ENCODE measurements at regions of chr9 and their contacts with region 1.

Region 1: GRCh38 chr9:137590462-137591383 is at the start of gene ZMYND19:
- DNase-seq: peak; percentile 87
- H3K4me3 ChIP-seq: peak within 1 kb of the TSS; percentile 41 to 80 (median 48)
- H3K27ac ChIP-seq: no peak within 1 kb of the TSS
- H3K4me1 ChIP-seq: peaks cover 9% of the 10 kb centered on the region
- H3K27me3 ChIP-seq: no peaks in the 10 kb centered on the region
- CTCF ChIP-seq: no peak
- POLR2A ChIP-seq: no peak
- total RNA-seq, gene ZMYND19: 32.6 and 35.4 TPM in 2 replicates

Region 2: DNA sequence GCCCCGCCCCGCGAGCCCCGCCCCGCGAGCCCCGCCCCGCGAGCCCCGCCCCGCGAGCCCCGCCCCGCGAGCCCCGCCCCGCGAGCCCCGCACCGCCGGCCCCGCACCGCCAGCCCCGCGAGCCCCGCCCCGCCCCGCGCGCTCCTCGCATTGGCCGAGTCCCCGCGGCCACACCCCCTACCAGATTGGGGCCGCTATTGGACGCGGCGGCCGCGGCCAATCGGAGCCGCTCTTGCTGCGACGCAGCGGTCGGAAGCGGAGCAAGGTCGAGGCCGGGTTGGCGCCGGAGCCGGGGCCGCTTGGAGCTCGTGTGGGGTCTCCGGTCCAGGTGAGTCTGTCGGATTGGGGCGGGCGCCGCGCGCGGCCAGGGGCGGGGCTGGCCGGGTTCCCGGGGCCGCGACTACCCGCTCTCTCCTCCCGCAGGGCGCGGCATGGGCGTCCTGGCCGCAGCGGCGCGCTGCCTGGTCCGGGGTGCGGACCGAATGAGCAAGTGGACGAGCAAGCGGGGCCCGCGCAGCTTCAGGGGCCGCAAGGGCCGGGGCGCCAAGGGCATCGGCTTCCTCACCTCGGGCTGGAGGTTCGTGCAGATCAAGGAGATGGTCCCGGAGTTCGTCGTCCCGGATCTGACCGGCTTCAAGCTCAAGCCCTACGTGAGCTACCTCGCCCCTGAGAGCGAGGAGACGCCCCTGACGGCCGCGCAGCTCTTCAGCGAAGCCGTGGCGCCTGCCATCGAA is 38.9 kb before region 1 on chr9 and contains the start of gene MRPL41:
- CTCF ChIA-PET with region 1: no interaction called
- POLR2A ChIA-PET with region 1: interaction called, 6 read pairs
- dilution Hi-C with region 1: no loop called
- intact Hi-C with region 1: loop called (anchors 1 kb)
- DNase-seq: peak; percentile 82
- H3K4me3 ChIP-seq: peak within 1 kb of the TSS; percentile 61 to 67 (median 62)
- H3K27ac ChIP-seq: peak within 1 kb of the TSS; percentile 49
- H3K4me1 ChIP-seq: peaks cover 9% of the 10 kb centered on the region
- H3K27me3 ChIP-seq: no peaks in the 10 kb centered on the region
- CTCF ChIP-seq: no peak
- POLR2A ChIP-seq: peak; percentile 81
- total RNA-seq, gene MRPL41: 50.7 and 53.3 TPM in 2 replicates

Region 3: GRCh38 chr9:137578518-137579258 is 12.0 kb before region 1 on chr9 and contains the start of gene DPH7:
- CTCF ChIA-PET with region 1: interaction called, 15 read pairs
- POLR2A ChIA-PET with region 1: no interaction called
- dilution Hi-C with region 1: no loop called
- intact Hi-C with region 1: no loop called
- DNase-seq: peak; percentile 91
- H3K4me3 ChIP-seq: peak within 1 kb of the TSS; percentile 77 to 94 (median 83)
- H3K27ac ChIP-seq: peak within 1 kb of the TSS; percentile 22
- H3K4me1 ChIP-seq: peaks cover 14% of the 10 kb centered on the region
- H3K27me3 ChIP-seq: no peaks in the 10 kb centered on the region
- CTCF ChIP-seq: peak; percentile 97 to 98
- POLR2A ChIP-seq: peak; percentile 62
- total RNA-seq, gene DPH7: 43.2 TPM in 2 replicates

Region 4: GRCh38 chr9:137605121-137606004 is 14.6 kb after region 1 on chr9 and contains the start of gene ARRDC1:
- CTCF ChIA-PET with region 1: interaction called, 4 read pairs
- POLR2A ChIA-PET with region 1: no interaction called
- dilution Hi-C with region 1: no loop called
- intact Hi-C with region 1: loop called (anchors 1 kb)
- DNase-seq: peak; percentile 84
- H3K4me3 ChIP-seq: peak within 1 kb of the TSS; percentile 34 to 89 (median 62)
- H3K27ac ChIP-seq: peak within 1 kb of the TSS; percentile 48
- H3K4me1 ChIP-seq: peaks cover 5% of the 10 kb centered on the region
- H3K27me3 ChIP-seq: no peaks in the 10 kb centered on the region
- CTCF ChIP-seq: no peak
- POLR2A ChIP-seq: no peak
- total RNA-seq, gene ARRDC1: 21.5 and 22.5 TPM in 2 replicates

Region 5: DNA sequence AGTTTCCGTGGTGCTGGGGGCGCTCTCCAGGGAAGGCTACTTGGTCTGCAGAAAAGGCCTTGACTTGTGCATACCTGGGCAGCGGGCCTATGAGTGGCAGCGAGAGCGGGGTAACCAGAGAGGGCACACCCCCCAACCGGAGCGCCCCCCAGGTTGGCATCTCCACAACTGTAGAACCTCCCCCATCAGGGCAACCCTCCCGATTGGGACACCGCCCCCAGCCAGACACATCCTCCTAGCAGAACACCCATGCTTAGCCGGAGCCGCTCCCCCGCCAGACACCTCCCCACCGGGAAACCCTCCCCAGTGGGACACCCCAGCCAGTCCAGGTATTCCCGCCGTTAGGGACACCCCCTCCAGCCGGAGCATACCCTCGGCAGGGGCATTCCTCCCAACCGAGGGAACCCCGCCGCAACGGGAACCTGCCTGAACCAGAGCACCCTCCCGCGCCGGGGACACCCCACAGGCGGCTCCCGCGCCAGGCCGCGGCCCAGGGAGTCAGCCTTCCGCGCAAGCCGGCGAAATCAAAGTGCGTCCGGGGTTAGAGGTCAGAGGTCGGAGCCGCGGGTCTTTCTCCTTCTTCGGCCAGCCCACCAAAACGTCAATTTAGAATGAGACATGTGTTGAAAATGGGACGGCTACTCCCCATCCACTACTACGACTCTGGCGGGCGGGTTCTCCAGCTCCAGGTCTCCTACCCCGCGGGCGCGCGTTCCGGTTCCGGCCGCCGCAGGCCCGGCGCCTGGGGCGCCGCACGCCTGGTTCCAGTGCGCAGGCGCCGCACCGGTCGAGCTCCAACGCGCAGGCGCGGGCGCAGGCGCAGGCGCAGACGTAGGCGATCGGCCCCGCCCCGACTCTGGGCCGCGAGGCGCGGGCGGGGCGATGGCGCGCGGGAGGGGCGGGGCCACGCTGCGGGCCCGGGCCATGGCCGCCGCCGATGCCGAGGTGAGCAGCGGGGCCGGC is 27.7 kb after region 1 on chr9 and contains the start of gene EHMT1:
- CTCF ChIA-PET with region 1: no interaction called
- POLR2A ChIA-PET with region 1: no interaction called
- dilution Hi-C with region 1: no loop called
- intact Hi-C with region 1: loop called (anchors 1 kb)
- DNase-seq: peak; percentile 83
- H3K4me3 ChIP-seq: peak within 1 kb of the TSS; percentile 72 to 82 (median 73)
- H3K27ac ChIP-seq: peak within 1 kb of the TSS; percentile 58
- H3K4me1 ChIP-seq: peaks cover 22% of the 10 kb centered on the region
- H3K27me3 ChIP-seq: no peaks in the 10 kb centered on the region
- CTCF ChIP-seq: no peak
- POLR2A ChIP-seq: peak; percentile 88
- total RNA-seq, gene EHMT1: 103 and 104 TPM in 2 replicates

Region 6: GRCh38 chr9:137665697-137666510 is 75.2 kb after region 1 on chr9:
- CTCF ChIA-PET with region 1: no interaction called
- POLR2A ChIA-PET with region 1: no interaction called
- dilution Hi-C with region 1: no loop called
- intact Hi-C with region 1: no loop called
- DNase-seq: no peak
- H3K4me3 ChIP-seq: no peak overlapping the region
- H3K27ac ChIP-seq: no peak overlapping the region
- H3K4me1 ChIP-seq: peaks cover 13% of the 10 kb centered on the region
- H3K27me3 ChIP-seq: no peaks in the 10 kb centered on the region
- CTCF ChIP-seq: no peak
- POLR2A ChIP-seq: no peak

Region 7: GRCh38 chr9:137745541-137745991 is 154.8 kb after region 1 on chr9:
- CTCF ChIA-PET with region 1: no interaction called
- POLR2A ChIA-PET with region 1: no interaction called
- dilution Hi-C with region 1: no loop called
- intact Hi-C with region 1: no loop called
- DNase-seq: no peak
- H3K4me3 ChIP-seq: no peak overlapping the region
- H3K27ac ChIP-seq: no peak overlapping the region
- H3K4me1 ChIP-seq: no peaks in the 10 kb centered on the region
- H3K27me3 ChIP-seq: no peaks in the 10 kb centered on the region
- CTCF ChIP-seq: no peak
- POLR2A ChIP-seq: no peak